ENCODE measurements at regions of chr11 and their contacts with region 1.

Region 1: DNA sequence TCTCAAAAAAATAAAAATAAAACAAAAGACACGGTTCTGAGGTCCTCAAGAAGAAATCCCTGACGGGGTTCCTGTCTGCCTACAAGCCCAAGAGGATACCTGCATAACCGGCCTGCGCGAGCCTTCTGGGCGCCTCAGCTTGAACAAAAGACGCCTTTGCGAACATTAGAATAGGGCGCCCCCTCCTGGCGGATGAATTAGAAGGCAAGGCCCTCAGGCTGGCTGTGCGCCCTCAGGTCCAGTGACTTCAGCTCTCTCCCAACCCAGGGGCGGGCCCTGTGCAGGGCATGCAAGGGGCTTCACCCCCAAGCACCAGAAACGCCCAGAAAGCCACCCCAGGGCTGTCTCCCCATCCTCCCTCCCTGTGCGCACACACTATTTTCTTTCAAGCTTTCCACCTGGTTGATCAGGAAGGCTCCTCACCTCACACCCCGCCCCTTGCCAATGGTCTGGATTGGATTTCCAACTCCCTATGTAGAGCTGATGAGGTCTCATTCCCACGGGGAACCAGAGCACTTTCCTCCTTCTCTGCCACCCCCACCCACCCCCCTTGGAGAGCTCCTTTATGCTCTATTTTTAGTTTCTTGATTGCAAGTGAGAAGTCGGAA is 273.3 kb downstream of the BUD13 start:
- DNase-seq: peak; percentile 73
- H3K4me3 ChIP-seq: no peak overlapping the region
- H3K27ac ChIP-seq: no peak overlapping the region
- H3K4me1 ChIP-seq: no peaks in the 10 kb centered on the region
- H3K27me3 ChIP-seq: peaks cover 15 to 18% of the 10 kb centered on the region in 2 experiments
- CTCF ChIP-seq: peak; percentile 64 to 84
- POLR2A ChIP-seq: no peak

Region 2: GRCh38 chr11:116130122-116130521 is 369.4 kb before region 1 on chr11:
- CTCF ChIA-PET with region 1: no interaction called
- POLR2A ChIA-PET with region 1: no interaction called
- dilution Hi-C with region 1: no loop called
- intact Hi-C with region 1: no loop called
- DNase-seq: no peak
- H3K4me3 ChIP-seq: no peak overlapping the region
- H3K27ac ChIP-seq: no peak overlapping the region
- H3K4me1 ChIP-seq: no peaks in the 10 kb centered on the region
- H3K27me3 ChIP-seq: no peaks in the 10 kb centered on the region
- CTCF ChIP-seq: no peak
- POLR2A ChIP-seq: no peak

Region 3: DNA sequence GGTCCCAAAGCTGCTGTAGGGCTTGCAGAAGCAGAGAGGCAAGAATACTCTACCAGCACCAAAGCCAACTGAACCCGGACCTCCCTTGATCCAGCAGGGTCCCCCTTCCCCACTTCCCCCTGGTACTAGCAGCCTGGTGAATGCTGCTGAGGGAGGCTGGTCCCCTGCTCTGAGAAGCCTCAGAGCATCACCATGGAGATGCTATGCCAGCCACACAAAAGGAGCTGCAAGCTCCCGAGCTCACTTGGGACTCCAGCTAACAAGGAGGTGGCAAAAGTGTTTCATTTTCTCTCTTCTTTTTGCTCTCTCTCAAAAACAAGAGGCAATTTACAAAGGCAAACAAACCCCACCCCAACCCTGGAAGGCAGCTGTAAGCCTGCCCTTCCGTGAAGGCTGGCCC is 236.5 kb before region 1 on chr11:
- CTCF ChIA-PET with region 1: no interaction called
- POLR2A ChIA-PET with region 1: no interaction called
- dilution Hi-C with region 1: no loop called
- intact Hi-C with region 1: no loop called
- DNase-seq: no peak
- H3K4me3 ChIP-seq: no peak overlapping the region
- H3K27ac ChIP-seq: no peak overlapping the region
- H3K4me1 ChIP-seq: no peaks in the 10 kb centered on the region
- H3K27me3 ChIP-seq: no peaks in the 10 kb centered on the region
- CTCF ChIP-seq: no peak
- POLR2A ChIP-seq: no peak

Region 4: GRCh38 chr11:116276051-116277044 is 223.2 kb before region 1 on chr11:
- CTCF ChIA-PET with region 1: interaction called, 5 read pairs
- POLR2A ChIA-PET with region 1: no interaction called
- dilution Hi-C with region 1: no loop called
- intact Hi-C with region 1: loop called (anchors 5 kb)
- DNase-seq: peak; percentile 50
- H3K4me3 ChIP-seq: no peak overlapping the region
- H3K27ac ChIP-seq: no peak overlapping the region
- H3K4me1 ChIP-seq: no peaks in the 10 kb centered on the region
- H3K27me3 ChIP-seq: peaks cover 0 to 3% of the 10 kb centered on the region in 2 experiments
- CTCF ChIP-seq: peak; percentile 84 to 95
- POLR2A ChIP-seq: no peak

Region 5: DNA sequence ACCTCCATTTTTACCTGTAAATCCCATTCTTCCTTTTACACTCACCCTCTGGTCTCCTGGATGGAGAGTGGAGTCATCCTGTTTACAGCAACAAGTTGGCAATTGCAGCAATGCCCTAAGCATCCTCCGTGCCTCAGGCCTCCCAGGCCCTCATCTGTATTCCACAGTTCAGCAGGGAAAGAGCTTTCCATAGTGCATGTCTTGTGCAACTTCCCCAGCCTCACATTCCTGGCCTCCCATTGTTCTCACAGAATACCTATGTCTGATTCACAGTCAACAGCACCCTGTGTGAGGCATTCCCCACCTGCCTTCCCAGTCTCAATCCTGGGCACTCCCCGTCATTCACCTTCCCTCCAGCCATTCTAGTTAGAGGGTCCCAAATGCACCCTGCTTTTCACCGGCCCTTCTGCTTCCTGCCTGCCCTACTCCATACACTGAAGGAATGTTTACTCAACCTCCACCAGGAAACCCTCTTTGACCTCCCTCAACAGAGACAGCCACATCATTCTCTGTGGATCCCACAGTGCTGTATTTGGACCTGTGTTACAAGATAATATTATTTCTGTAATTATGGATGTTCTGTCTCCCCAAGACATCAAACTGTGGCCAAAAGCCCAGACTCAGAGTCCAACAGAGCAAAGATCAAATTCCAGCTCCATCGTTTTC is 132.4 kb before region 1 on chr11:
- CTCF ChIA-PET with region 1: interaction called, 11 read pairs
- POLR2A ChIA-PET with region 1: no interaction called
- dilution Hi-C with region 1: no loop called
- intact Hi-C with region 1: no loop called
- DNase-seq: peak; percentile 58
- H3K4me3 ChIP-seq: no peak overlapping the region
- H3K27ac ChIP-seq: peak overlapping the region; percentile 90
- H3K4me1 ChIP-seq: peaks cover 25% of the 10 kb centered on the region
- H3K27me3 ChIP-seq: no peaks in the 10 kb centered on the region
- CTCF ChIP-seq: no peak
- POLR2A ChIP-seq: no peak

Region 6: GRCh38 chr11:116461789-116462188 is 37.7 kb before region 1 on chr11:
- CTCF ChIA-PET with region 1: interaction called, 14 read pairs
- POLR2A ChIA-PET with region 1: no interaction called
- dilution Hi-C with region 1: no loop called
- intact Hi-C with region 1: no loop called
- DNase-seq: no peak
- H3K4me3 ChIP-seq: no peak overlapping the region
- H3K27ac ChIP-seq: no peak overlapping the region
- H3K4me1 ChIP-seq: no peaks in the 10 kb centered on the region
- H3K27me3 ChIP-seq: peaks cover 2 to 8% of the 10 kb centered on the region in 2 experiments
- CTCF ChIP-seq: no peak
- POLR2A ChIP-seq: no peak

Region 7: DNA sequence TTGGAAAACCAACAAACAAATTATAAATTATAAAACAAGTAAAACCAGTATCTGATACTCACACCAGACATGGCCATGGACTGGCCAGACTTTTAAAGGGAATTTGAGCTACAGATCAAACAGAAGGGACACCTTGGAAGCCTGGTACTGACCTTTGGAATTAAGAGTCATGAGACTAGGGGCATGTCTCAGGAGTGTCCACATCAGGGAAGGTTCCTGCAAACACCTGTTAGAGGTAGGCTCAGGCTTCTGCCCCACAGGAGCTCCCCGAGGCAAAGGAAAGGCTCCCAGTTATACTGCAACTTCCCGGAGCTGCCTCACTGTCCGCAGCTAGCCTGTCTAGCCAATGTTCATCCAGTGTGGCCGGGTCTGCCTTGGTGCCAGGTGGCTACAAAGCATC is 16.8 kb before region 1 on chr11:
- CTCF ChIA-PET with region 1: interaction called, 10 read pairs
- POLR2A ChIA-PET with region 1: no interaction called
- dilution Hi-C with region 1: no loop called
- intact Hi-C with region 1: no loop called
- DNase-seq: no peak
- H3K4me3 ChIP-seq: no peak overlapping the region
- H3K27ac ChIP-seq: no peak overlapping the region
- H3K4me1 ChIP-seq: no peaks in the 10 kb centered on the region
- H3K27me3 ChIP-seq: peaks cover 3 to 6% of the 10 kb centered on the region in 2 experiments
- CTCF ChIP-seq: no peak
- POLR2A ChIP-seq: no peak

Region 8: DNA sequence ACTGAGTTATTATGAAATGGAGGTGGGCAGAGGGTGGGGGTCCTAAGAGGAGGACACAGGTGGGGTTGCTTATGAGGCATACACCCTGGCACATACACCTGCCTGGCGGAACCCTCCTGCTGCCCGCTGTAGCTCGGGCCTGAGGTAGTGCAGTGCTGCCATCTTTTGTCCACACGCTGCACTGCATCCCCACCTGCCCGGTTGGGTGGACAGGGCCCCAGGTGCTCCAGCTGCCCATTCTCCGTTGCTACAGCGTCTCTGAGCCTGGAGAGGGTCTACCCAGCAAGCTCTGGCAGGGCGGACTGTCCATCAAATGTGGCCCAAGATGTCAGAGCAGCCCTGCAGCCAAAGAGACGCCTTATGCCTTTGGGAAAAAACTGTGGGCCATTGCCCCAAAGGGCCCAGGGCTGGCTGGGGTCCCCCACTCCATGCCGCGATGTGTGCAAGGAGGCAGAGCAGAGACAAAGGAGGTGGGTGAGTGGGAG is 142.1 kb after region 1 on chr11:
- CTCF ChIA-PET with region 1: interaction called, 23 read pairs
- POLR2A ChIA-PET with region 1: no interaction called
- dilution Hi-C with region 1: no loop called
- intact Hi-C with region 1: no loop called
- DNase-seq: peak; percentile 29
- H3K4me3 ChIP-seq: no peak overlapping the region
- H3K27ac ChIP-seq: no peak overlapping the region
- H3K4me1 ChIP-seq: no peaks in the 10 kb centered on the region
- H3K27me3 ChIP-seq: no peaks in the 10 kb centered on the region
- CTCF ChIP-seq: peak; percentile 73 to 86
- POLR2A ChIP-seq: no peak

Region 9: DNA sequence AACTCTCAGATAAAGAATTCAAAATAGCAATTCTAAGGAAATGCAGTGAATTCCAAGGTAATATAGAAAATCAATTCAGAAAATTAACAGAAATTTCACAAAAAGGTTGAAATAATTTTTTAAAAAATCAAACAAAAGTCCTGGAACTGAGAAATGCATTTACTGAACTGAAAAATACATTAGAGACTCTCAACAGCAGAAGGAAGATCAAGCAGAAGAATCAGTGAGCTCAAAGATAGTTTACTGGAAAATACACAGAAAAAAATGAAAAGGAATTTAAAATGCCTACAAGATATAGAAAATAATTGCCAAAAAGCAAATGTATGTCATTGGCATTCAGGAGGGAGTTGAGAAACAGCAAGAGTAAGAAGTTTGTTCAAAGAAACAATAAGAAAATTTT is 166.0 kb after region 1 on chr11:
- CTCF ChIA-PET with region 1: no interaction called
- POLR2A ChIA-PET with region 1: no interaction called
- dilution Hi-C with region 1: no loop called
- intact Hi-C with region 1: no loop called
- DNase-seq: no peak
- H3K4me3 ChIP-seq: no peak overlapping the region
- H3K27ac ChIP-seq: no peak overlapping the region
- H3K4me1 ChIP-seq: no peaks in the 10 kb centered on the region
- H3K27me3 ChIP-seq: peaks cover 3 to 6% of the 10 kb centered on the region in 2 experiments
- CTCF ChIP-seq: no peak
- POLR2A ChIP-seq: no peak

Measured in endothelial cell of umbilical vein (primary cell).